A673 (cell line): ENCODE measurements at regions of chr4 and their contacts with region 1.

Region 1: DNA sequence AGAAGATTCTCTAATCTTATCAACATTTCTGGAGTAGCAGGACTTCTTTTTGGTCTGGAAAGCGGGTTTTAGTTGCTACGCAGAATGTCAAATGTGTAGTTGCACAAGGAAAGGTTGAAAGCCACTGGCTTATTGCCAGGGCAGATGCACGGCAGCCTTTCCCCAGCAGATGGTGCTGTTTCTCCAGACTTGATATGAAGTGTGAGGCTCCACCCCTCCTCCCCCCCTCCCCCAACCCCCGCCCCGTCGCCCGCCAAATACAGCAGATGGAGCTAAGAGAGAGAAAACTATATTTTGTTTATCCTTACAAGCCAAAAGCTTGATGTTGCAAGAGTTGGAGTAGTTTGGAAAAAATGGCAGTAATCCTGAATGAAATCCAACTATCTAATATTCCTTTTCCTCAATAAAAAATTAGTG is 32.0 kb downstream of the ENOPH1 start:
- DNase-seq: peak; percentile 73
- H3K4me3 ChIP-seq: no peak overlapping the region
- H3K27ac ChIP-seq: no peak overlapping the region
- H3K4me1 ChIP-seq: no peaks in the 10 kb centered on the region
- H3K27me3 ChIP-seq: no peaks in the 10 kb centered on the region
- CTCF ChIP-seq: peak; percentile 48

Region 2: DNA sequence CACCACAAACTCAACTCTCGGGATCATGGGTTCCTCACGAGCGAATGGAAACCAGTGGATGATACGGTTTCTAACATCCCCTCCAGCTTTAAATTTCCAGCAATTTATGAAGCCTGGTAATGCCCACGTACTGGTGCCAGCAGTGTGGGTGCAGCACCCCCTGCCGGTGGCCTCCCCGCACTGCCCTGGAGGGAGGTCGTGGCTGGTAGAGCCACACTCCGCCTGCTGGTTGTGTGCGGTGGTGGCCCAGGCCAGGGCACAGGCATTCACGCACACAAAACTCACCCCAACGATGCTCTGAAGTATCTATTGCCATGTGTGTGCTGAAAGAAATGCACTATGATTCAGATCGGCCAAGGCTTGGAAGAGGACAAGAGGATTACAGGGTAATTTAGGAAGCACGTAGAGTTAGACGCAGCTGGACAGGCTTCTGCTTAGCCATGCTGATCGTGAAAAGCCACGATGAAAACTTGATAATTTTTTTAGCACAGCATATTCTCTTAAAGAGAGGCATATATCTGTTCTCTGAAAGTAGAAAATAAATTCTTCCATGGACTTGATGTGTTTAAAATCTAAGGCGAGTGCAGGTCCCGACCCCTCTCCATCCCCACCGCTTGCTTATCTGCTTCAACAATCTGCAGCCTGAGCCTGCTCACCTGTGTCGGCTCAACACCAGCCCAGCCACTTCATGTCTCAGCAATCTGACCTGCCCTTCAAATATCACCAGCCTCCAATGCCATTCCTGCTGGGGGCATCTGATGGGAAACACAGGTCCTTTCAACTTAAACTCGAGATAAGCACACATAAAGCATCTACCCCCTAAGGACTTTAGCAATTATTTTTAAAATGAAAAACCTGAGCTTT is 277.1 kb after region 1 on chr4:
- CTCF ChIA-PET with region 1: interaction called, 13 read pairs
- POLR2A ChIA-PET with region 1: no interaction called
- intact Hi-C with region 1: loop called (anchors 5 kb)
- DNase-seq: peak; percentile 63
- H3K4me3 ChIP-seq: no peak overlapping the region
- H3K27ac ChIP-seq: no peak overlapping the region
- H3K4me1 ChIP-seq: no peaks in the 10 kb centered on the region
- H3K27me3 ChIP-seq: no peaks in the 10 kb centered on the region
- CTCF ChIP-seq: peak; percentile 87

Region 3: GRCh38 chr4:82801910-82802521 is 339.6 kb after region 1 on chr4:
- CTCF ChIA-PET with region 1: no interaction called
- POLR2A ChIA-PET with region 1: no interaction called
- intact Hi-C with region 1: loop called (anchors 10 kb)
- DNase-seq: no peak
- H3K4me3 ChIP-seq: no peak overlapping the region
- H3K27ac ChIP-seq: no peak overlapping the region
- H3K4me1 ChIP-seq: no peaks in the 10 kb centered on the region
- H3K27me3 ChIP-seq: no peaks in the 10 kb centered on the region
- CTCF ChIP-seq: peak; percentile 56

Region 4: GRCh38 chr4:82890901-82891706 is 428.7 kb after region 1 on chr4 and contains the start of gene SEC31A:
- CTCF ChIA-PET with region 1: interaction called, 10 read pairs
- POLR2A ChIA-PET with region 1: no interaction called
- intact Hi-C with region 1: loop called (anchors 5 kb)
- DNase-seq: peak; percentile 91
- H3K4me3 ChIP-seq: peak within 1 kb of the TSS; percentile 82
- H3K27ac ChIP-seq: peak within 1 kb of the TSS; percentile 88
- H3K4me1 ChIP-seq: no peaks in the 10 kb centered on the region
- H3K27me3 ChIP-seq: no peaks in the 10 kb centered on the region
- CTCF ChIP-seq: no peak
- total RNA-seq, gene SEC31A: 96.9 and 98.2 TPM in 2 replicates

Region 5: GRCh38 chr4:82900331-82901128 is 438.1 kb after region 1 on chr4 and contains the start of gene THAP9:
- CTCF ChIA-PET with region 1: no interaction called
- POLR2A ChIA-PET with region 1: no interaction called
- intact Hi-C with region 1: loop called (anchors 5 kb)
- DNase-seq: peak; percentile 97
- H3K4me3 ChIP-seq: peak within 1 kb of the TSS; percentile 76
- H3K27ac ChIP-seq: peak within 1 kb of the TSS; percentile 98
- H3K4me1 ChIP-seq: no peaks in the 10 kb centered on the region
- H3K27me3 ChIP-seq: no peaks in the 10 kb centered on the region
- CTCF ChIP-seq: no peak
- total RNA-seq, gene THAP9: 3.8 and 4.2 TPM in 2 replicates

Region 6: GRCh38 chr4:83284193-83285054 is 822.0 kb after region 1 on chr4 and contains the start of gene COQ2:
- CTCF ChIA-PET with region 1: no interaction called
- POLR2A ChIA-PET with region 1: no interaction called
- intact Hi-C with region 1: loop called (anchors 10 kb)
- DNase-seq: peak; percentile 88
- H3K4me3 ChIP-seq: peak within 1 kb of the TSS; percentile 64
- H3K27ac ChIP-seq: peak within 1 kb of the TSS; percentile 93
- H3K4me1 ChIP-seq: no peaks in the 10 kb centered on the region
- H3K27me3 ChIP-seq: no peaks in the 10 kb centered on the region
- CTCF ChIP-seq: 0 out of 2 replicates have a peak, but pooled peaks have one; percentile 10
- total RNA-seq, gene COQ2: 12.6 and 15.3 TPM in 2 replicates